ENCODE measurements at regions of chr2 and their contacts with region 1.

Region 1: DNA sequence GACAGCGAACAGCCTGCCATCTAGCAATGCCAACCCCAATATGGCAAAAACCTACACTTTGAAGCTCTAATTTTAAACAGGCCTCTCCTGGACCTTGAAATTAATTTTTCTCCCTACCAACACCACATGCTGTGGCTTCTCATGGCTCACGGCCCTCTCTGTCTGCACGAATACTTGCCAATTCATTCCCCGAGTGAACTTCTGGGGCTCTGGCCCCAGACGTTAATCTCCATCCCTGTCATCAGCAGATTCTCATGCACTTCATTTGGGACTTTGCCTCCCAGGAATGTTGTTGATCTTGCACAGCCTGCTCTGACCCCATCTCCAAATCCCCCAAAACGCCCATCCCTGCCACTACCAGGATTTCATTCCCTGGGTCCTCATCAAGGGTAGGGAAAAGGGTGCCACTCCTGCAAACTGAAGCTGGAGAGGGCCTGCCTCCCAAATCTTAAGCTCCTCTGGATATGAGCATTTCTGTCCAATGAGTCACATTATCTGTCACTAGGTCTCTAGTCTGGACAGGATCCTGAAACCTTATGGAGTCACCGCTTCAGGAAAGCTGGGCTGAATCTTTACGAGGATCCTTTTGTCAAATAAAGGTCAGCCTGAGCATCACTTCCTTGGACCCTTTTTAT is 10.4 kb downstream of the FIGLA start:
- DNase-seq: no peak
- H3K4me3 ChIP-seq: no peak overlapping the region
- H3K27ac ChIP-seq: no peak overlapping the region
- H3K4me1 ChIP-seq: no peaks in the 10 kb centered on the region
- H3K27me3 ChIP-seq: peaks cover 12% of the 10 kb centered on the region
- CTCF ChIP-seq: no peak
- POLR2A ChIP-seq: no peak

Region 2: DNA sequence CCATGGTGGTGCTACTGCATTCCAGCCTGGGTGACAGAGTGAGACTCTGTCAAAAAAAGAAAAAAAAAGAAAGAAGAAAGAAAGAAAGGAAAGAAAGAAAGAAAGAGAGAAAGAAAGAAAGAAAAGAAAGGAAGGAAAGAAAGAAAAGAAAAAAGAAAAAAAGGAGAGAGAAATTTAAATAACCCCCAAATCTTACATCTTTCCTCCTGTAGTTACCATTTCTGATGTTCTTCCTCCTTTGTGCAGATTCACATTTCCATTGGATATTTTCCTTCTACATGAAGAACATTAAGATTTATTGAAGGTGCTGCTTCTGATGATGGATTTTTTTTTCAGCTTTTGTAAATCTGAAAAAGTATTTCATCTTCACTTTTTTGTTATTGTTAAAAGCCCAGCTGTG is 129.0 kb before region 1 on chr2:
- intact Hi-C with region 1: loop called (anchors 5 to 10 kb)
- DNase-seq: no peak
- H3K4me3 ChIP-seq: no peak overlapping the region
- H3K27ac ChIP-seq: no peak overlapping the region
- H3K4me1 ChIP-seq: no peaks in the 10 kb centered on the region
- H3K27me3 ChIP-seq: peaks cover 22% of the 10 kb centered on the region
- CTCF ChIP-seq: no peak
- POLR2A ChIP-seq: no peak

Measured in adrenal gland (tissue), 19 donors.